GM12878 (cell line): ENCODE measurements at regions of chr5 and their contacts with region 1.

Region 1: GRCh38 chr5:143002459-143003328 is 232.5 kb downstream of the ARHGAP26 start:
- DNase-seq: peak; percentile 82
- ATAC-seq: peak; percentile 78
- H3K4me3 ChIP-seq: no peak overlapping the region
- H3K27ac ChIP-seq: peak overlapping the region; percentile 89
- H3K4me1 ChIP-seq: peaks cover 49% of the 10 kb centered on the region
- H3K27me3 ChIP-seq: no peaks in the 10 kb centered on the region
- CTCF ChIP-seq: peak; percentile 71 to 79 (median 75)
- EP300 ChIP-seq: peak; percentile 95 to 97
- POLR2A ChIP-seq: peak; percentile 47; the same call in 1 of the 2 replicates
- RAD21 ChIP-seq: peak; percentile 86

Region 2: GRCh38 chr5:142931896-142932686 is 70.6 kb before region 1 on chr5:
- CTCF ChIA-PET with region 1: interaction called, 5 read pairs
- POLR2A ChIA-PET with region 1: no interaction called
- RAD21 ChIA-PET with region 1: interaction called, 5 read pairs
- SMC1A ChIA-PET with region 1: interaction called, 149 read pairs
- in situ Hi-C with region 1: loop called (anchors 10 kb)
- intact Hi-C with region 1: loop called (anchors 5 kb)
- DNase-seq: no peak
- ATAC-seq: no peak
- H3K4me3 ChIP-seq: no peak overlapping the region
- H3K27ac ChIP-seq: no peak overlapping the region
- H3K4me1 ChIP-seq: peaks cover 4% of the 10 kb centered on the region; the same call in 1 of the 2 replicates
- H3K27me3 ChIP-seq: no peaks in the 10 kb centered on the region
- CTCF ChIP-seq: no peak
- EP300 ChIP-seq: no peak
- POLR2A ChIP-seq: no peak
- RAD21 ChIP-seq: no peak

Region 3: DNA sequence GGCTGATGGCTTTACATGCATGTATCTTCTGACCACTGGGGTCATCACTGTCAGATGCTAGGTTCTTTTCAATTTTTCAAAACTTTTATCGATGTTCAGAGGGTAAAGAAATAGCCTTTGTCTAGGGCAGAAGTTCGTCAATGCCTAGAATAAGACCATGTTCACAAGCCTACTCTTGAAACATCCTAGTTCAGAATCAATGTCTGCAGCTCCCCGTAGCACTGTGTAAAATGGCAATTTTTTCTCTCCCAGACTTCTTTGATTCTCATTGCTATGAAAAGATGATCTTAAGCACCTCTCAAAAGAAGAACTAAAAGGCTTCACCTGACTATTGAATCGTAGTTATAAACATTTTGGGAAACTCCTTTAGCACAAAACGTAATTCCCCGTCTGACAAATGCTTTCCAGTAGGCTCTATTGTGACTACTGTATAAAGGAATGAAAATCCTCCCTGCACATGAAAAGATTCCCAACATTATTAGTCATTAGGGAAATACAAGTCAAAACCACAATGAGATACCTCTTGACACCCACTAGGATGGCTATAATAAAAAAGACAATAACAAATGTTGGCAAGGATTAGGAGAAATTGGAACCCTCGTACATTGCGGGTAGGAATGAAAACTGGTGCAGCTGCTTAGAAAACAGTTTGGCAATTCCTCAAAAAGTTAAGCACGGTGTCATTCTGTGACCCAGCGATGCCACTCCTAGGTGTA is 31.0 kb after region 1 on chr5:
- CTCF ChIA-PET with region 1: interaction called, 3 read pairs
- POLR2A ChIA-PET with region 1: interaction called, 3 read pairs
- RAD21 ChIA-PET with region 1: interaction called, 23 read pairs
- SMC1A ChIA-PET with region 1: interaction called, 49 read pairs
- in situ Hi-C with region 1: no loop called
- intact Hi-C with region 1: no loop called
- DNase-seq: no peak
- ATAC-seq: no peak
- H3K4me3 ChIP-seq: no peak overlapping the region
- H3K27ac ChIP-seq: no peak overlapping the region
- H3K4me1 ChIP-seq: peaks cover 23% of the 10 kb centered on the region
- H3K27me3 ChIP-seq: no peaks in the 10 kb centered on the region
- CTCF ChIP-seq: no peak
- EP300 ChIP-seq: no peak
- POLR2A ChIP-seq: no peak
- RAD21 ChIP-seq: no peak

Region 4: DNA sequence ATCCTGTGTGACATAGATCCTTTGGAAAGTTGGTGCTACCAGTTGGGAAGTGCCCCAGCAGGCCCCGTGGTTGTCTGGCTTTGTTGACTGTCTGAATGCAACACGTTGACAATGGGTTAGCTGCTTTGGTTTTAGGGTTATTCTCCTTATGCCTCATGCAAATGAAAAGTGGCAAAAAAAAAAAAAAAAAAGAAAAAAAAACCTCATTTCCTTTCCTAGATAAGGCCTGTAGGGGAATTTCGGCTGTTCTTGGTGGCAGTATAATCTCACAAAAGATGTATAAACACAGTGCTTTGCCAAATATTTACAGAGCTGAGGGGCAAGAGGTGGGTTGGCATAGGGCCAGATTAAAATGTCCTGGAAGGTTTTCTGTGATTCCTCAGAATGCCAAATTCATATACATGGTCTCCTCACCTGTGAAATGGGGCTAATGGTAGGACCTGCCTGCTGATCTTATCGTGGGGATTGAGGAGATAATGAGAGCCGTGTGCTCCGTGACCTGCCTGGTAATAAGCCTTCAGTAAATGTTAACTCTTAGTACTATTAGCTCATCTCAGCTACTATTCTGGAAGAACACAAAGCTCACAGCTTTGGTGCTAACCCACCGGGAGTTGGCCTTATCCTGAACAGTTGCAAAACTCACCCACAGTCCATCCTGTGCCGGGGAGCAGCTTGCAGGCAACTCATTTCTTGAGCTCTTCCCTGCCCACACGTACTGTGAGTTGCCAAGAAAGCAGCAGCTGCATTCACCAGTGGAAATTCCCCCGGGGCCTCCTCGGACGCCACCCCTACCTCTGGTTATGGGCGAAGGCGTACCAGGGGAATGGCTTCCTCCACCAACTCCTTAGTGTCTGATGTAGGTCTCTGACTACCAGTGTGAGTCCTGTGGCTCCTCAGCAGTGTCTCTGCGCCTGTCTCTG is 180.5 kb after region 1 on chr5:
- CTCF ChIA-PET with region 1: interaction called, 13 read pairs
- POLR2A ChIA-PET with region 1: interaction called, 3 read pairs
- RAD21 ChIA-PET with region 1: interaction called, 84 read pairs
- SMC1A ChIA-PET with region 1: interaction called, 18 read pairs
- in situ Hi-C with region 1: no loop called
- intact Hi-C with region 1: no loop called
- DNase-seq: peak; percentile 84
- ATAC-seq: peak; percentile 82
- H3K4me3 ChIP-seq: peak overlapping the region; percentile 32; the same call in 1 of the 2 replicates
- H3K27ac ChIP-seq: peak overlapping the region; percentile 90
- H3K4me1 ChIP-seq: peaks cover 53% of the 10 kb centered on the region
- H3K27me3 ChIP-seq: no peaks in the 10 kb centered on the region
- CTCF ChIP-seq: peak in 2 of 3 experiments; percentile 4 to 12; a peak in 1 of 6 replicates
- EP300 ChIP-seq: peak; percentile 78 to 79
- POLR2A ChIP-seq: peak; percentile 46
- RAD21 ChIP-seq: 0 out of 2 replicates have a peak, but pooled peaks have one; percentile 32

Region 5: DNA sequence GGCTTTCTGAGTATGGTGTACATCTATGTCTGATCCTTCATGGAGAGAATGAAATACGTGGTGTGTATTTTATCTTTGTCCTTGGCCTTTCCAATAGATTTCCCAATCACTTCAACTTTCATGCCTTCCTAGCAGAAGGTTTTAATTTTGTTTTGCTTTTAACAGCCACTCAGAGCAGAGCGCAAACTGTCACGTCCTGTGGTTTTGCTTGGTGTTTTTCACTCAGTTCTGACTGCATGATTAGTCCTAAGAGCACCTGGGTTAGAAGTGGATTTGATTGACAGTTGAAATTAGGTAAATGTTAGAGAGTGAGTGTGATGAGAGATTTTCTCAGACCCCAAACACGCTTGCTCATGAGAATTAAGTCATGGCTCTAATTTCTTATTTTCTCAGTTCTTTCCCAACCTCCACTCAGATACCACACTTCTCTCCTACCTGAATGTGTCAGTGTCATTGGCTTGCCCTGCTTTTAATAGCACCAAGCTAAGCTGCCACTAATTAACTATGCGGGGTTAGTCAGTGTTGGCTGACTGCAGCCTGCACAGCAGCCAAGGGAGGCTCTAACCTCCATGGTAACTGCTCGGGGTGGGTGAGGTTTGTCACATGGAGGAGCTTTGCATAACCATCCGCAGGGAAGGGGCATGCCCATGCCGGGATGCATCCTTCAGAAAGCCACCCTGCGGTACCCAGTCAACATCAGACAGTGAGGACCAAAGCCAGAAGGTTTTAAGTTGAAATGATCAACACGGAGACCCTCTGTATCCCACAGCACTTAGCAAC is 227.4 kb after region 1 on chr5:
- CTCF ChIA-PET with region 1: interaction called, 10 read pairs
- POLR2A ChIA-PET with region 1: interaction called, 9 read pairs
- RAD21 ChIA-PET with region 1: interaction called, 41 read pairs
- SMC1A ChIA-PET with region 1: interaction called, 41 read pairs
- in situ Hi-C with region 1: no loop called
- intact Hi-C with region 1: no loop called
- DNase-seq: peak; percentile 99
- ATAC-seq: peak; percentile 89
- H3K4me3 ChIP-seq: peak overlapping the region; percentile 34; the same call in 1 of the 2 replicates
- H3K27ac ChIP-seq: peak overlapping the region; percentile 90
- H3K4me1 ChIP-seq: peaks cover 29% of the 10 kb centered on the region
- H3K27me3 ChIP-seq: no peaks in the 10 kb centered on the region
- CTCF ChIP-seq: no peak
- EP300 ChIP-seq: peak; percentile 74 to 88; a peak in 2 of 4 replicates
- POLR2A ChIP-seq: peak; percentile 56; the same call in 1 of the 2 replicates
- RAD21 ChIP-seq: peak; percentile 50; the same call in 1 of the 2 replicates

Region 6: DNA sequence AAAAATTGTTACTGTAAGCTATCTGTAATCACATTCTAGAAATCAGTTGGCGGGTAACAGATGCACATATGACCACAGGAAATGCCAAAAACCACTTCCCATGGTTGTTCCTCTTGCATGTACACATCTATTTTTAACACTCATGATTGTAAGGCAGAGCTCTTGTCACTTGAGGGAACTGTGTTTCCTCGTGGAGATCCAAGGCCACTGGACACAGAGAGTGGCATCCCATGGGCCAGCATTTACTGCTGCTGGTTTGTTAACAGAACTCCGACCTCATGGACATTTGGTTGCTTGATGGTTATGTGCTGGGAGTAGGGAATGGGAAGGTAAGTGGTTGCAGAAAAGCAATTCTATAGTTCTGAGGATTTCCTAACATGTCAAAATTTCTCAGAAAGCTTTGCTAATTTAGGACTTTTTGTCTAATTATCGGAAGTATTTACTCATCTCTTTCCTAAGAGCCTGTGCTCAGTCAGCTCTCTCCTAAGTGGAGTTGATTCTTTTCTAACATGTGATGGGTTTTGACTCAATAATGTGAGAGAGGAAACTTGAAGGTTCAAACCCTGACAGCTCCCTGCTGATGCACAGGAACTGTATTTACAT is 602.8 kb after region 1 on chr5:
- CTCF ChIA-PET with region 1: interaction called, 3 read pairs
- POLR2A ChIA-PET with region 1: no interaction called
- RAD21 ChIA-PET with region 1: no interaction called
- SMC1A ChIA-PET with region 1: no interaction called
- in situ Hi-C with region 1: no loop called
- intact Hi-C with region 1: loop called (anchors 10 kb)
- DNase-seq: peak; percentile 60
- ATAC-seq: peak; percentile 68
- H3K4me3 ChIP-seq: no peak overlapping the region; the same call in 1 of the 2 replicates
- H3K27ac ChIP-seq: peak overlapping the region; percentile 69
- H3K4me1 ChIP-seq: peaks cover 22% of the 10 kb centered on the region
- H3K27me3 ChIP-seq: no peaks in the 10 kb centered on the region
- CTCF ChIP-seq: no peak
- EP300 ChIP-seq: peak in 1 of 2 experiments; percentile 40; a peak in 2 of 4 replicates
- POLR2A ChIP-seq: no peak
- RAD21 ChIP-seq: 0 out of 2 replicates have a peak, but pooled peaks have one; percentile 9